ENCODE measurements at regions of chr11 and their contacts with region 1.

Region 1: DNA sequence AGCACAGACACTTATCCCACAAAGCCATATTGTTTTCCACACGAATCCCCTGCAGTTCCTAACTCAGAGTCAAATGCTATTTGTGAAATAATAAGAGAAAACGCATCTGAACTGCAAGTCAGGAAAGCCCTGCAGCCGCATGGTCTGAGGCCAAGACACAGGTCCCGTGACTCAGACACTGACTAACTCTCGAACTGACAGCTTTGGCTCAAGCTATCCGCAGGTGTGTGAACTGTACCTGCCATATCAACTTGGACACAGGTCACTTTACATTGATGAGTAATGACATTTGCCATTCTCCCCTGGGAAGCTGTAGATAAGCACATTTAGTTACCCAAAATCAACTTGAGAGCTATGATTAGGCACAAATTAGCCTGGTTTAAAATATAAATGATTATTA is 34.9 kb upstream of the NFRKB start:
- DNase-seq: no peak
- H3K4me3 ChIP-seq: no peak overlapping the region
- H3K27ac ChIP-seq: no peak overlapping the region
- H3K4me1 ChIP-seq: no peaks in the 10 kb centered on the region
- H3K27me3 ChIP-seq: no peaks in the 10 kb centered on the region
- CTCF ChIP-seq: no peak

Region 2: DNA sequence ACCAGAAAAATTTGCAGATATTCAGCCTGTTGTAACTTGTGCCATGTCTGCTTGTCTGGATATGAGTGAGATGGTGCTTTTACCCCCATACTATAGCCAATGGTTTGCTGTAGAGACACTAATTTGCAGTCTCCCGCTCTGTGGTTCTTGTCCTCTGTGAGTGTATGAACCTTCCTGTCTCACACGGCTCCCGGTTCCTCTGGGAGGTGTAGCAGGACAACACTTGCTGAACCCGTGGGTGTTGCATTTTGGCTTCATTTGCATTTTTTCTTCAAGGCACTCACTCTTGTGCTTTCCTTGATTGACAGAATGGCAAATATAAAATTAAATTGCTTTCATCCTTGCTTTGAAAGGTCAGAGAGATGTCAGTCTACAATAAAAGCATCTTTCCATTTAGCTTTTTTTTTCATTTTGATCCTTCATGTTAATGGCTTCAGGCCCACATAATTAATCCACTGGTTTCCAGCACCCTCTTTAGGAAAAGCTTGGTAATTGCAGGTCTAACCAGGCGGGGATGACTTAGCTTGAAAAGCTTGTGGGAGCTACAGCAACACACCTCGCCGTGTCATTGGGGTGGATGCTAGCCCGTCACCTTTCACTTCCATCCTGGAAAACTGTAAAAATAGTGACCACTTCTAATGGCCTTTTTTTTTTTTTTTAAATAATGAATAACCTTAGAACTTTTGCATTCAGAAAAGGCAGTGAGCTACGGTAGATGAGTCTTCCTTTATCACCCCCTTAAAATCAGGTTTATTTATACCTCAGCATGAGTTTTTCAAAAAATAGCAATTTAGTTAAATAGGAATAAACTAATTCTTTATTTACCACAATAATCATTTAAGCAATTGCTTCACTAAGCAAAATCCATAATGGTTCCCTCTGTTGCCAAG is 201.9 kb after region 1 on chr11:
- intact Hi-C with region 1: loop called (anchors 2 kb)
- DNase-seq: no peak
- H3K4me3 ChIP-seq: no peak overlapping the region
- H3K27ac ChIP-seq: no peak overlapping the region
- H3K4me1 ChIP-seq: no peaks in the 10 kb centered on the region
- H3K27me3 ChIP-seq: no peaks in the 10 kb centered on the region
- CTCF ChIP-seq: peak; percentile 84

Measured in tibial artery (tissue), 4 donors.